ENCODE measurements at regions of chr15 and their contacts with region 1.

Region 1: GRCh38 chr15:80455668-80456442 is 51.7 kb downstream of the ARNT2 start:
- DNase-seq: peak; percentile 57 to 65 (median 62)
- H3K4me3 ChIP-seq: no peak overlapping the region
- H3K27ac ChIP-seq: no peak overlapping the region
- H3K4me1 ChIP-seq: peaks cover 10% of the 10 kb centered on the region
- H3K27me3 ChIP-seq: no peaks in the 10 kb centered on the region
- CTCF ChIP-seq: peak; percentile 76 to 92 (median 88)
- EP300 ChIP-seq: no peak
- POLR2A ChIP-seq: no peak

Region 2: GRCh38 chr15:80567721-80568157 is 111.9 kb after region 1 on chr15:
- intact Hi-C with region 1: loop called (anchors 5 to 10 kb)
- DNase-seq: peak in 4 of 5 donors; percentile 45 to 65 (median 50)
- H3K4me3 ChIP-seq: no peak overlapping the region
- H3K27ac ChIP-seq: no peak overlapping the region
- H3K4me1 ChIP-seq: no peaks in the 10 kb centered on the region
- H3K27me3 ChIP-seq: no peaks in the 10 kb centered on the region
- CTCF ChIP-seq: peak; percentile 50 to 66 (median 56)
- EP300 ChIP-seq: no peak
- POLR2A ChIP-seq: no peak

Region 3: GRCh38 chr15:80755885-80756284 is 300.0 kb after region 1 on chr15:
- intact Hi-C with region 1: loop called in 1 of 4 experiments (anchors 5 kb)
- DNase-seq: no peak
- H3K4me3 ChIP-seq: no peak overlapping the region
- H3K27ac ChIP-seq: no peak overlapping the region
- H3K4me1 ChIP-seq: peaks cover 2% of the 10 kb centered on the region
- H3K27me3 ChIP-seq: no peaks in the 10 kb centered on the region
- CTCF ChIP-seq: no peak
- EP300 ChIP-seq: no peak
- POLR2A ChIP-seq: no peak

Region 4: DNA sequence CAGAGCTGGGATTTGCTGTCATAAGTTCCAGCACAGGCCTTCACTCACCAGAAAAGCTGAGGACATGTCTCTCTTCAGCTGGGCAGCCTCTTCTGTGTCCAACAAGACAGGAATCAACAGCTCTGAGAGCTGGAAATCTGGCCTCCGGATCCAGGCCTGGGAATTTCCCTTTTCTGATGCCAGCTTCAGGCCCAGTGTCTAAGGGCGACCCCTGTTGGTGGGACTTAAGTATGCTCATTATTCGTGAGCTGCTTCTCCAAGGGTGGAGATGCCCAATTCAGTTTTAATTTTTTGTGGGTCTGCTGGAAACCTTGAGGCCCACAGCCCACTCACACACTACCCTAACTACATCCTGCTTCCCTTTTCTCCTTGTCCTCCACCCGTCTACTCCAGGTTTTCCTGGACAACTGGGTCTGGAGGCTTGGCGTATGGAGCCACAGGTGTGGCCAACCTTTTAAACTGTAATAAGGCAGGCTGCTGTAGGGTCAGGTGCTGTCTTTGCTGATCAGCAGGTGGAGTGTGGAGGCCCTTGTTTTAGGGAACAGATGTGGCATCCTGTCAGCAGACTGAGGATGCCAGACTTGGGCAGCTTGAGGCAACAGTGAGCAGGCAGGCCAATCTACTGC is 320.7 kb after region 1 on chr15:
- intact Hi-C with region 1: loop called (anchors 2 to 10 kb)
- DNase-seq: peak; percentile 62 to 69 (median 65)
- H3K4me3 ChIP-seq: no peak overlapping the region
- H3K27ac ChIP-seq: no peak overlapping the region
- H3K4me1 ChIP-seq: peaks cover 15% of the 10 kb centered on the region
- H3K27me3 ChIP-seq: no peaks in the 10 kb centered on the region
- CTCF ChIP-seq: peak; percentile 54 to 59 (median 56)
- EP300 ChIP-seq: no peak
- POLR2A ChIP-seq: no peak

Region 5: DNA sequence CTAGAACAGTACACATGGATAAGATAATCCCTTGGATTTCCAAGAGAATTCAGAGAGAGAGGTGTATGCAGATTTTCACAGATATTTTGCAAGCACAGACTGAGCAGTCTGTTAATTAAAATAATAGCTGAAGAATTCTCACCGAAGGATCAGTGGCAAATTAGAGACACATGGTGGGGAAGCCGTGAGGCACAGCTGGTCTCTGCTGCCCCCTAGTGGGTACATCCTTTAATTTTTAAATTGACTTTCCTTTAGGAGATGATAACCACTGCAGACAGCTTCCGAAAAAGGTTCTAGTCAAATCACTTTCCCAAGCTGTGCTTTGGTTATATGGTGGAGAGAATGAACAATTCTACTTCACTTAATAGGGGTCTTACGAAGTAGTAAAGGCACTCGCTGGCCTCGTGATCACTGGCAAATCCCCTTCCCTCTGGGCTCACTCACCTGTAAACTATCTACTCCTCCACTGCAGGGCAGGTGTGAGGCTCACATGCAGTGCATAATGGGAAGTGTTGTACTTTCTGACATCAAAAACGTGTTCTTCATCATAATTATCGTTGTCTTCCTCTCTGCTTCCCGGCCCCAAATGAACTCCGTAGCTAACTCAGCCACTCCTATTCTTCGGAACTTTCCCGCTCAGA is 514.3 kb after region 1 on chr15:
- intact Hi-C with region 1: loop called in 2 of 4 experiments (anchors 5 kb)
- DNase-seq: peak; percentile 55 to 71 (median 69)
- H3K4me3 ChIP-seq: no peak overlapping the region
- H3K27ac ChIP-seq: no peak overlapping the region
- H3K4me1 ChIP-seq: peaks cover 5% of the 10 kb centered on the region
- H3K27me3 ChIP-seq: no peaks in the 10 kb centered on the region
- CTCF ChIP-seq: peak; percentile 55 to 96 (median 88)
- EP300 ChIP-seq: no peak
- POLR2A ChIP-seq: no peak

Region 6: DNA sequence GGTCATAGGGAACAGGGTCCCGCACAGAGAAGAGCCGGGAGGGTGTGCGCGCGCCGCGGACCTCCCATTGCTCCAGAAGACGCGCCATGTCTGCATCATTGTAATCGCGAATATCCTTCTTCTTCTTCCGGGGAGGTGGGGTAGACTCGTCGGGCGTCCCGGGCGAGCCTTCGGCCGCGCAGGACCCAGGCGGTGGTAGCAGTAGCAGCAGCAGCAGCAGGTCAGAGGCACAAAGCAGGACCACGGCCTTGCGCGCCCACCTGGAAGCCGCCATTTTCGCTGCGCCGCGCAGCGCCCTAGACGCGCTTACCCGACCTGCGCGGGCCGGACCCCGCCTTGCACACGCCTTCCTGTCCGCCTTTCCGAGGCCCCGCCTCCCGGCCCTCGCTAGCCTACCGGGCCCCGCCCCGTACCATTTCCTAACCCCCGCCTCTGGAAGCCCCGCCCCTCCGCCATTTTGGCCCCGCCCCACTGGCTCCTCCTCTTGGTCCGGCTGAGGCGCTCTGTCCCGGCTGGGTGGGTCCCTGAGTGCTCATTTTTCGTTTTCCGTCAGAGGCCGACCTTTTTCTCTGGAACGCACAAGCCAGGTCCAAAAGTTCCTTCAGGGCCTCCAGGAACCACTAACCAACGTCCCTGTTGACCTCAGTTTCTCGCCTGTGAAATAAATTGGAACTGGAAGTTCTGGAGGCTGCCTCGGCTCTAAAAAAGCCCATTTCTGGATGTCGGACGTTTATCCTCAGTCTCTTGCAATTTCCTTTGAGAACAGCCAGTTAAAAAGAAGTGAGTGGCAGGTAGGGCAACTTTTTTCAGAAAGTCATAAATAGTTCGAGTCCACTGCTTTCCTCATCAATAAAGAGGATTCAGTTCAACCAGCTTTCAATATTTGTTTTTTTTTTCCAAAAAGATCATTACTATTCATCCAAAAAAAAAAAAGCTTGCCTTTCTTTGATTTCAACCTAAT is 533.9 kb after region 1 on chr15 and contains the start of gene MESD:
- intact Hi-C with region 1: loop called in 1 of 4 experiments (anchors 10 kb)
- DNase-seq: peak; percentile 98 to 99 (median 99)
- H3K4me3 ChIP-seq: peak within 1 kb of the TSS; percentile 90
- H3K27ac ChIP-seq: peak within 1 kb of the TSS; percentile 82 to 84
- H3K4me1 ChIP-seq: peaks cover 18% of the 10 kb centered on the region
- H3K27me3 ChIP-seq: no peaks in the 10 kb centered on the region
- CTCF ChIP-seq: no peak
- EP300 ChIP-seq: no peak
- POLR2A ChIP-seq: peak; percentile 70
- total RNA-seq, gene MESD: 20.7 to 34.2 (median 29.3) TPM